AG04449 (cell line): ENCODE measurements at regions of chr16 and their contacts with region 1.

Region 1: DNA sequence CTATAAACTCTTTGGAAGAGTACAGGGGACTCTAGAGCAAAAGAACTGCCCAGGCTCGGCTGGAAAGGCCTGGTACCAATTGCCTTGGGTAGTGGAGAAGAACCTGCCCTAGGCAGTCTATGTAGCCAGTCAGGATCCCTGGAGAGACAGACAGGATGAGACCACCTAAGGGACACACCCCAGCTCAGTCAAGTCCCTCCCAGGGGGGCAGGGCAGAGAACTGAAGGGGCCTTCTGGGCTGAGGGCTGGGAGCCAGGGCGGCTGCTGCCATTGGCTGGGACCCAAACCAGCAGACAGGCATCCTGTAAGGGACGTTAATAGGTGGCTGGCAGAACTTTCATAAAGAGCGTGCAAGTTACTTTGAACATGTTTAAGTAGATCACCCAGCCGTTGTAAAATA is 12.8 kb upstream of the SLC38A8 start:
- DNase-seq: no peak
- H3K4me3 ChIP-seq: no peak overlapping the region
- CTCF ChIP-seq: no peak

Region 2: DNA sequence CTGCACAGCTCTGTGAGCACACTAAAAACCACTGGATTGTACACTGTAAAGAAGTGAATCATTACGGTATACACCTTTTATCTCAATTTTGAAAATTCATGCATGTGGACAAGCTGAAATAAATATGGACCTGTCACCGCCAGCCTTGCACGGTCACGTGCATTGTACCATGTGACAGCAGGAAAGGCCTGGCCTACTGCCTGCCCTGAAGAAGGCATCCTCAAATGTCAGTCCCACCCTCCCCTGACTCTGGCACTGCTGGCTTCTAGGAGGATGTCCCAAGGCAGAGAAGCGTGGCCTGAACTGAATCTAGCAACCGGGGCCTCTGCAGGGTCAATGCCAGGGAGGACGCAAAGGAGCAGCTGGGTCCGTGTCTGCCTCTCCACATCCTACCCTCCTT is 47.4 kb before region 1 on chr16:
- CTCF ChIA-PET with region 1: no interaction called
- POLR2A ChIA-PET with region 1: no interaction called
- DNase-seq: no peak
- H3K4me3 ChIP-seq: no peak overlapping the region
- CTCF ChIP-seq: no peak

Region 3: DNA sequence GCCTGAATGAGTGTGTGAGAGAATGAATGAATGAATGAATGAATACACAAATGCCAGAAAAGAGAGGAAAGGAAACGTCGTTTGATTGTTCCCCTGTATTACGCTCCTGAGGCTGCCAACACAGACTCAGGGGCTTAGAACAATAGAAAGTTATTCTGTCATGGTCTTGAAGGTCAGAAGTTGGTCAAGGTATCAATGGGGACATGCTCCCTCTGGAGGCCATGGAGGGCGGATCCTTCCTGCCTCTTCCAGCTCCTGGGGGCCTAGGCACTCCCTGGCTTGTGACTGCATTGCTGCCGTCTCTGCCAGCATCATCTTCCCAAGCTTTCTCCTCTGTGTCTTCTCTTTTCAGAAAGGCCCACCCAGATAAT is 11.3 kb before region 1 on chr16:
- CTCF ChIA-PET with region 1: interaction called, 14 read pairs
- POLR2A ChIA-PET with region 1: no interaction called
- DNase-seq: no peak
- H3K4me3 ChIP-seq: no peak overlapping the region
- CTCF ChIP-seq: peak; percentile 30

Region 4: GRCh38 chr16:84434800-84435199 is 379.4 kb after region 1 on chr16:
- CTCF ChIA-PET with region 1: no interaction called
- POLR2A ChIA-PET with region 1: no interaction called
- DNase-seq: no peak
- H3K4me3 ChIP-seq: no peak overlapping the region
- CTCF ChIP-seq: no peak